ENCODE measurements at regions of chr13 and their contacts with region 1.

Region 1: DNA sequence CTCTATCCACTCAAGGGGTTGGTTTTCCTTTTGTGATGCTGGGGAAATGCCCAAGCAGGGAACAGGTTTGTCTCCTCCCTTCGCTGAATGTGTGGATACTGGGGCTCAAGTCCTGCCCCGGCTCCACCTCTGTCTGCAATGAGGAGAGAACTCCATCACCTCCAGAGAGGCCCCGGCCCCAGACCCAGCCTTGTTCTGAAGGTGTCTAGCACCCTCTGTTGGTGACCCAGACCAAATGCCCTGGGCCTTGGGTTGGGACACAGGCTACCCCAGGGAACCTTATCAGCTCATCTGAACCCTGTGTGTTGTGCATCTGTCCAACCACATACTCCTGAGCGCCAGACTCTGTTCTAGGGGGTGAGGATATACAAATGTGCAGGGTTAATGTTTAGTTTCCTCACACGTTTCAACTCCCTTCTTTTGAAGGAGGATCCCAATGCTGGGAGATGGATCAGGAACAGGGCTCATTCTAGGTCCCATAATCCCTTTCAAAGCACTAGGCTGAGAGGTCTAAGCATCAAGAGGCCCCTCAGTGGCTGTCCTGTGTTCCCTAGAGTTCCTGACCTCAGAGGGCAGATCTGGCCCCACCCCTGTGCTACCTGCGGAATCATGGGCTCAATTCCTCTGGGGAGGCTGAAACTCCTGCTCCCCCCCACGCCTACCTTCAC is 112.5 kb upstream of the SLC7A1 start:
- DNase-seq: peak; percentile 52
- H3K4me3 ChIP-seq: no peak overlapping the region
- H3K27ac ChIP-seq: no peak overlapping the region
- H3K4me1 ChIP-seq: no peaks in the 10 kb centered on the region
- H3K27me3 ChIP-seq: peaks cover 2% of the 10 kb centered on the region
- CTCF ChIP-seq: peak; percentile 71 to 93

Region 2: DNA sequence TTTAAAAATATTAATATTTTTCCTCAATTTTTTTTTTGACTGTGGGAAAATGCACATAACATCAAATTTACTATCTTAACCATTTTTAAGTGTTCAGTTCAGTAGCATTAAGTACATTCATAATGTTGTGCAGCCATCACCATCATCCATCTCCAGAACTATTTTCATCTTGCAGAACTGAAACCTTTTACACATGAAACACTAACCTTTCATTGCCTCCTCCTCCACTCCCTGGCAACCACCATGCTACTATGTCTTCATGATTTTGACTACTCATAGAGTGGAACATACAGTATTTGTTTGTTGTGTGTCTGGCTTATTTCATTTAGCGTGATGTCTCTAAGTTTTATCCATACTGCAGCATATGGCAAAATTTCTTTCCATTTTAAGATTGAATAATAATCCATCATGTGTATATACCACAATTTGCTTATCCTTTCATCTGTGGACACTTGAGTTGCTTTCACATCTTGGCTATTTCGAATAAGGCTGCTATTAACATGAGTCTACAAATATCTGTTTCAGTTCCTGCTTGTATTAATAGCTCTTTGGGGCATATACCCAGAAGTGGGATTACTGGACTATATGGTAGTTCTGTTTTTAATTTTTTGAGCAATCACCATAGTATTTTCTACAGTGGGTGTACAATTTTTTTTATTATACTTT is 511.5 kb before region 1 on chr13:
- CTCF ChIA-PET with region 1: no interaction called
- dilution Hi-C with region 1: no loop called
- in situ Hi-C with region 1: no loop called
- intact Hi-C with region 1: no loop called
- DNase-seq: no peak
- H3K4me3 ChIP-seq: no peak overlapping the region
- H3K27ac ChIP-seq: no peak overlapping the region
- H3K4me1 ChIP-seq: no peaks in the 10 kb centered on the region
- H3K27me3 ChIP-seq: no peaks in the 10 kb centered on the region
- CTCF ChIP-seq: no peak

Region 3: DNA sequence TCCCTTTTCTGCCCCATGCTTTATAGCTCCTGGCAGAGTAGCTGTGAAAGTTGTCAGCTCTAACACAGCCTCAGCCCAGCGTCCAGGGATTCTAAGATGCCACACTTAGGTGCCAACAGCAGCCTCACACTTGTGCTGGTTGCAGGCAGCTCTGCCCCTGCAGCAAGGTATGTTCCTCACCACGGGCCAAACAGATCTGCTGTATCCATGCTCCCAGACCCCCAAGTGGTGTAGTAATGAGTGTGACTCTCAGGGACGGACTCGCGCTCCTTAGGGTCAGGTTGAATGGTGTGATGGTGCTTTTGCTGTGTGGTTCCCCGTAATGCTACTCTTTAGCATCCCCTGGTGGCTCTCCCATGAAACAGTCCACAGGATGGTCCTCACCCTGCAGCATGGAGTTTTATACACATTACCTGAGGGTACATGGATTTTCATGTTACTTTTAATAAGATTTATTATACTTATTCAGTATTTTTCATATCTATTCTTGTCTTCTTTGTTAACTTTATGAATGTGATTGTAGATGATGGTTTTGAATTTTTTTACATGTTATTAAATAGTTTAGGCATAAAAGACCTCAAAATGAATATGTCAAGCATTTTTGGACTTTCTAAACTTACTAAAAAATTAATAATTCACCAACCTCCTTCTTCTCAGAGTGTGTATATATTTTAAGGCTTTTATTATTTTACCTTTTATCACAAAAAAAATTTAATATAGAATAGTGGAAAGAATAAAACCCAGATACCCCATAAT is 345.0 kb before region 1 on chr13:
- CTCF ChIA-PET with region 1: no interaction called
- dilution Hi-C with region 1: no loop called
- in situ Hi-C with region 1: no loop called
- intact Hi-C with region 1: loop called (anchors 5 kb)
- DNase-seq: peak; percentile 32
- H3K4me3 ChIP-seq: no peak overlapping the region
- H3K27ac ChIP-seq: no peak overlapping the region
- H3K4me1 ChIP-seq: no peaks in the 10 kb centered on the region
- H3K27me3 ChIP-seq: no peaks in the 10 kb centered on the region
- CTCF ChIP-seq: peak; percentile 97 to 99

Region 4: DNA sequence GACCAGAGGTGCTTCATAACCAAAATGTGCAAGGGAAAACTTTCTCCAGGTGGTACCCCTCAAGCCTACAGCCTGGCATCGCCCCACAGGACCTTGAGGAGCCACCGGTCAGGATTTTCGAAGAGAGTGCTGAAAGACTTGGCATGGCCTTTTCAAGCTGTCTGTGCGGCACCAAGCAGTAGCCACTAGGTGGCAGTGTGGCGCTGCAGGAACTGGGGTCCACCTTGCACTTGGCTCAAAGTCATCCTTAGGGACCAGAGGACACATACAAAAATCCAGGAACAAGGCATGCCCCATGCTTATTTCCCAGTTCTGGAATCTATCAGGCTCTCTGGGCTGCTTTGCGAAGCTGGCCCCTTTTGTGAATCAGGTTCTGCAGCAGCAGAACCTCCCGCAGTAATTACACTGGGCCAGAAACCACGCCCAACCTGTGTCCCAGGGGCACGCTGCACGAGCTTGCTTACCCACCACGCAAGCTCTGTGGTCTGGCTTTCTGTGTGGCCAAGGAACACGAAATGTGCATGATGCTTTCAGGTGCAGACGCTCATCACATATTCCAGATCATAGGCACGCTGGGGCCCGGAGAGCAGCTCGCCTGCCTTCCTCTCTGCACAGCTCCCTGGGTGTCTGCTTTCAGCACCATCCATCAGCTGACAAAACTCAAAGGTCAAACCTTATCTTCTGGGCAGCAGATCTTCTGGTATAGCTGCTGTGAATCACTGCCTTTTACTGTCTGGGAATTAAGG is 199.7 kb before region 1 on chr13:
- CTCF ChIA-PET with region 1: no interaction called
- dilution Hi-C with region 1: loop called (anchors 25 kb)
- in situ Hi-C with region 1: loop called in 1 of 2 experiments (anchors 10 kb)
- intact Hi-C with region 1: loop called (anchors 1 kb)
- DNase-seq: peak; percentile 42
- H3K4me3 ChIP-seq: no peak overlapping the region
- H3K27ac ChIP-seq: no peak overlapping the region
- H3K4me1 ChIP-seq: no peaks in the 10 kb centered on the region
- H3K27me3 ChIP-seq: no peaks in the 10 kb centered on the region
- CTCF ChIP-seq: peak; percentile 97 to 98

Region 5: GRCh38 chr13:29522044-29522685 is 185.8 kb before region 1 on chr13:
- CTCF ChIA-PET with region 1: no interaction called
- dilution Hi-C with region 1: loop called (anchors 25 kb)
- in situ Hi-C with region 1: loop called (anchors 10 kb)
- intact Hi-C with region 1: no loop called
- DNase-seq: no peak
- H3K4me3 ChIP-seq: no peak overlapping the region
- H3K27ac ChIP-seq: no peak overlapping the region
- H3K4me1 ChIP-seq: no peaks in the 10 kb centered on the region
- H3K27me3 ChIP-seq: no peaks in the 10 kb centered on the region
- CTCF ChIP-seq: no peak

Region 6: DNA sequence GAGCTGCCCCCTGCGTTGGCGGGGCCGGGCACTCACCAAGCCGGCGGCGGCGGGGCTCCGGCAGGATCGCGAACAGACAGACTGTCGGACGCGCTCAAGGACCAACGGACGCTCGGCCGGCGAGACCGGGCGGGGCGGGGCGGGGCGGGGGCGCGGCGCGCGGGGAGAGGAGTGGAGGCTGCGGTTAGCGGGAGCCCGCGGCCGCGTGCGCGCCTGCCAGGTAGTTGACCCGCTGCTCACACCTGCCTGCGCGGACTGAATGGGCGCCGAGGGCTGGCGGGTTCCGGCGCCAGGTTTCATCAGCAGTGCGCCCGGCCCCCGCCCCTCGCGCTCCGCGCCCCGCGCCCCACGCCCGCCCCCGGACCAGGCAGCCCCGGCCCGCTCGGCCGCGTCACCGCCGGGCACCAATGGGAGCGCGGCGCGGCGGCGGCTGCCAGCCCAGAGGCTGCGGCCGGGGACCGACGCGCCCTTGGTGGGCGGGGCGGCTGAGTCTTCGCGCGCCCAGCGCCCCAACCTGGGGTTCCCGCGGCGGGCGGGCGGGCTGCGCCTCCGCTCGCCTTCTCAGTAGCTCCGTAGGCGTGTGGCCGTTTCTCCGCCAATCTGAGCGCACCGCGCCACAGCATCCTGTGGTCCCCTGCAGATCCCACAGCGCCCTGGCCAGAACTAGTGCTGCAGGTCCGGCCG is 112.5 kb before region 1 on chr13 and contains the start of gene SLC7A1:
- CTCF ChIA-PET with region 1: no interaction called
- dilution Hi-C with region 1: no loop called
- in situ Hi-C with region 1: no loop called
- intact Hi-C with region 1: loop called (anchors 1 kb)
- DNase-seq: peak; percentile 87
- H3K4me3 ChIP-seq: peak within 1 kb of the TSS; percentile 55 to 92 (median 91)
- H3K27ac ChIP-seq: peak within 1 kb of the TSS; percentile 96
- H3K4me1 ChIP-seq: peaks cover 19% of the 10 kb centered on the region
- H3K27me3 ChIP-seq: no peaks in the 10 kb centered on the region
- CTCF ChIP-seq: no peak
- total RNA-seq, gene SLC7A1: 82.7 to 176 TPM

Measured in mammary epithelial cell (primary cell).